ENCODE measurements at regions of chr17 and their contacts with region 1.

Region 1: GRCh38 chr17:49290690-49291359 is 60.2 kb upstream of the PHOSPHO1 start:
- DNase-seq: peak; percentile 44 to 62
- ATAC-seq: peak; percentile 78 to 84; a peak in 5 of 6 replicates
- H3K4me3 ChIP-seq: no peak overlapping the region
- H3K27ac ChIP-seq: no peak overlapping the region
- H3K4me1 ChIP-seq: no peaks in the 10 kb centered on the region
- CTCF ChIP-seq: peak; percentile 70
- EP300 ChIP-seq: no peak
- POLR2A ChIP-seq: no peak
- RAD21 ChIP-seq: peak; percentile 69 to 70

Region 2: DNA sequence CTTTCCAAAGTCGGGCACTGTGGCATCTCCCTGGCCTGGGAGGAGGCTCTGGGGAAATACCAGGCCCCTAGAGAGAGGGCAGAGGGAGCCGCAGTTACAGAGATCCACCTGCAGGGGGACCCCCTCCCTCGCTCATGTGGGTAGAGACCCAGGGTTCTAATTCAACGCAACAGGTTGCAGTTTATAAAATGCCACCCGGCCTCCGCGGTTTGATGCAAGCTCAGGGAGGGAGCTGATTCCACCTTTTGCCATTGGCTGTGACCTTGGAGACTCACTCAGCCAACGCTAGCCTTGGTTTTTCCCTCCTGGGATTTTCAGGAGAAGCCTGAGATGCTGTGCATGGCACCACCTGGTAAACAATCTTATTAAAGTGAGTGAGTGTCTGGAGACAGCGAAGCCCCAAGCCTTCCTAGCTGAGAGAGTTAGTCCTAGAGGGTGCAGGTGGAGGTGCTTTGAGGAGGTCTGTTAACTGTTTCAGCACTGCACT is 485.9 kb before region 1 on chr17:
- CTCF ChIA-PET with region 1: interaction called, 11 read pairs
- POLR2A ChIA-PET with region 1: no interaction called
- DNase-seq: peak; percentile 78 to 96
- ATAC-seq: peak; percentile 95
- H3K4me3 ChIP-seq: no peak overlapping the region
- H3K27ac ChIP-seq: peak overlapping the region; percentile 53 to 73
- H3K4me1 ChIP-seq: peaks cover 56% of the 10 kb centered on the region
- CTCF ChIP-seq: peak; percentile 97
- EP300 ChIP-seq: no peak
- POLR2A ChIP-seq: no peak
- RAD21 ChIP-seq: peak; percentile 99

Region 3: GRCh38 chr17:49201481-49201927 is 89.3 kb before region 1 on chr17:
- CTCF ChIA-PET with region 1: interaction called, 11 read pairs
- POLR2A ChIA-PET with region 1: no interaction called
- DNase-seq: no peak
- ATAC-seq: no peak
- H3K4me3 ChIP-seq: no peak overlapping the region
- H3K27ac ChIP-seq: no peak overlapping the region
- H3K4me1 ChIP-seq: peaks cover 15% of the 10 kb centered on the region
- CTCF ChIP-seq: no peak
- EP300 ChIP-seq: no peak
- POLR2A ChIP-seq: no peak
- RAD21 ChIP-seq: no peak

Region 4: DNA sequence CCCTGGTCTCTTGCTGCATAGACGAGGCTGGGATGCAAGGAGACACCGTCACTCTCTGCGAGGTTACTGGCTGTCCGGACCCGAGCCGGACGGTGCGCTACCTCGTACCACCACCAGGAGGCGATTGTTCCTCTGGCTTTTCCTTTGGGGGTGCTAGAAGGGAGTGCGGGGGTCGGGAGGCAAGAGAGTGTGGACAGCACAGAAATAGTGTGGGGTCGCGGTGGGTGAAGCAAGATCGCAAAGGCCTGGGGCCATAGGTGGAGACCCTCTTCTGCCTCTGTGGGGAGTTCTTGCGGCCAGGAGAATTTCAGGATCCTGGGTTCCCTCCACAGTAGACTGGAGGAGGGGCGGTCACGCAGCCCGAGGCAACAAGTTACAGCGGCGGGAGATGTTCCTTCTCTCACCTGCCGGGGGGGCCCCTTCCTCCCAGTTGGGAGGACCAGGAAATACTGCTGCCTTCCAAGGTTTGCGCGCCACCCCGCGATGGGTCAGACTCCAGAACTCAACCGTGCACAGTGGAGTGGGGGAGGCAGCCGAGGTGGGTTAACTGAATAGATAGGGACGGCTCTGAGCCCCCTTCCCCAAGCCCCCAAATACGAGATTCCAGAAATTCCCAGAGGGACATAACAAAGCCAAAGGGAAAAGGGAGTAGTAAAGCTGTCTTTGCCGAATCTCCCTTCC is 67.2 kb before region 1 on chr17:
- CTCF ChIA-PET with region 1: interaction called, 66 read pairs
- POLR2A ChIA-PET with region 1: interaction called, 5 read pairs
- DNase-seq: peak; percentile 52 to 87
- ATAC-seq: peak; percentile 36 to 77; a peak in 4 of 6 replicates
- H3K4me3 ChIP-seq: 0 out of 3 replicates have a peak overlapping the region, but pooled peaks have one; percentile 0
- H3K27ac ChIP-seq: 0 out of 6 replicates have a peak overlapping the region, but pooled peaks of 1 of the 2 experiments have one; percentile 10
- H3K4me1 ChIP-seq: peaks cover 11% of the 10 kb centered on the region
- CTCF ChIP-seq: peak; percentile 74
- EP300 ChIP-seq: no peak
- POLR2A ChIP-seq: no peak
- RAD21 ChIP-seq: peak; percentile 51 to 56

Region 5: GRCh38 chr17:49260011-49260921 is 30.6 kb before region 1 on chr17:
- CTCF ChIA-PET with region 1: interaction called, 12 read pairs
- POLR2A ChIA-PET with region 1: interaction called, 3 read pairs
- DNase-seq: peak; percentile 83 to 85
- ATAC-seq: peak; percentile 91 to 92
- H3K4me3 ChIP-seq: peak overlapping the region; percentile 61
- H3K27ac ChIP-seq: peak overlapping the region; percentile 81 to 88
- H3K4me1 ChIP-seq: peaks cover 9% of the 10 kb centered on the region; the same call in 2 of the 3 replicates
- CTCF ChIP-seq: no peak
- EP300 ChIP-seq: no peak
- POLR2A ChIP-seq: peak; percentile 29; the same call in 1 of the 2 replicates
- RAD21 ChIP-seq: no peak

Region 6: DNA sequence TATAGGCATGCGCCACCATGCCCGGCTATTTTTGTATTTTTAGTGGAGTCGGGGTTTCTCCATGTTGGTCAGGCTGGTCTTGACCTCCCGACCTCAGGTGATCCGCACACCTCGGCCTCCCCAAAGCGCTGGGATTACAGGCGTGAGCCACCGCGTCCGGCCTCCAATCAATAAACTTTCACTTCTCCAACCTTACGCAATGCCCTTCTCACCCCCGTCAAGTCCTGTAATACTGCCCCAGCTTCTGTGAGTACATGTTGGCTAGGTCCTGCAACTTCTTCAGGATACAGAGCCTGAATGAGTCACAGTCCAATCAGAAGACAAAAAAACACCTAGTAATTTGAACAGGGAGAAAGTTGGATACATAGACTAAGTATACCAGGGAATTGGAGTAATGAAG is 13.2 kb before region 1 on chr17:
- CTCF ChIA-PET with region 1: interaction called, 36 read pairs
- POLR2A ChIA-PET with region 1: no interaction called
- DNase-seq: no peak
- ATAC-seq: no peak
- H3K4me3 ChIP-seq: no peak overlapping the region
- H3K27ac ChIP-seq: no peak overlapping the region
- H3K4me1 ChIP-seq: no peaks in the 10 kb centered on the region
- CTCF ChIP-seq: no peak
- EP300 ChIP-seq: no peak
- POLR2A ChIP-seq: no peak
- RAD21 ChIP-seq: no peak

Region 7: DNA sequence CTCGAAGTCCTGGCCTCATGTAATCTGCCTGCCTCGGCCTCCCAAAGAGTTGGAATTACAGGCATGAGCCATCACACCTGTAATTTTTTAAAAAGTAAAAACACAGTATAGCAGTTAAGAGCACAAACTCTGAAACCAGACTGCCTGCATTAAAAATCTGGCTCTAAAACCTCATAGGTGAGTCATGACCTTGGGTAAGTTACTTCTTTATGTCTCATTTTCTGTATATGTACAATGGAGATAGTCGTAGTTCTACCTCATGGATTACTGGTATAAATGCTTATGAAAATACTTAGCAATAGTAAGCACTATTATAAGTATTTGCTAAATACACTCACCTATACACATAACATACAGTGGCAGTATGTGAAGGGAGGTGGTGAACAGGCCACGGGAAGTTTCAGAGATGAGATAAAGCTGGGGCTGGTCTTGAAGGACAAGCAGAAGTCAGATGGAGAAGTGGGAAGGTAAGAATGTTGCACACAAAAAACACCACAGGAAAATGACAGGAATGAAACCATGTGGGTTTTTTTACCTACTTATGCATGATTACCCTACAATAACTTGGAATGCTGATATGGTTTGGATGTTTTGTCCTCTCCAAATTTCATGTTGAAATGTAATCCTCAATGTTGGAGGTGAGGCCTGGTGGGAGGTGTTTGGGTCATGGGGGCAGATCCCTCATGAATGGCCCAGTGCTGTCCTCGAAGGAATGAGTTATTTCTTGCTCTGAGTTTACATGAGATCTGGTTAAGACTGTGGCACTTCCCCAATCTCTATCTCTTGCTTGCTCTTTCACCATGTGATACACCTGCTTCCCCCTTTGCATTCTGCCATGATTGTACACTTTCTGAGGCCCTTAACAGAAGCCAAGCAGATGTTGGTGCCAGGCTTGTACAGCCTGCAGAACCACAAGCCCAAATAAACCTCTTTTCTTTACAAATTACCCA is 37.3 kb after region 1 on chr17:
- CTCF ChIA-PET with region 1: no interaction called
- POLR2A ChIA-PET with region 1: no interaction called
- DNase-seq: no peak
- ATAC-seq: no peak
- H3K4me3 ChIP-seq: no peak overlapping the region
- H3K27ac ChIP-seq: no peak overlapping the region
- H3K4me1 ChIP-seq: 0 out of 3 replicates have a peak, but pooled peaks cover 2% of the 10 kb centered on the region
- CTCF ChIP-seq: no peak
- EP300 ChIP-seq: no peak
- POLR2A ChIP-seq: no peak
- RAD21 ChIP-seq: no peak